Activated CD8-positive, alpha-beta T cell treated with anti-CD3 and anti-CD28 coated beads, Interleukin-2, amount 10 ng/mL, durations not matched to agents 7 days and 5 days (primary cell): ENCODE measurements at regions of chr20 and their contacts with region 1.

Region 1: DNA sequence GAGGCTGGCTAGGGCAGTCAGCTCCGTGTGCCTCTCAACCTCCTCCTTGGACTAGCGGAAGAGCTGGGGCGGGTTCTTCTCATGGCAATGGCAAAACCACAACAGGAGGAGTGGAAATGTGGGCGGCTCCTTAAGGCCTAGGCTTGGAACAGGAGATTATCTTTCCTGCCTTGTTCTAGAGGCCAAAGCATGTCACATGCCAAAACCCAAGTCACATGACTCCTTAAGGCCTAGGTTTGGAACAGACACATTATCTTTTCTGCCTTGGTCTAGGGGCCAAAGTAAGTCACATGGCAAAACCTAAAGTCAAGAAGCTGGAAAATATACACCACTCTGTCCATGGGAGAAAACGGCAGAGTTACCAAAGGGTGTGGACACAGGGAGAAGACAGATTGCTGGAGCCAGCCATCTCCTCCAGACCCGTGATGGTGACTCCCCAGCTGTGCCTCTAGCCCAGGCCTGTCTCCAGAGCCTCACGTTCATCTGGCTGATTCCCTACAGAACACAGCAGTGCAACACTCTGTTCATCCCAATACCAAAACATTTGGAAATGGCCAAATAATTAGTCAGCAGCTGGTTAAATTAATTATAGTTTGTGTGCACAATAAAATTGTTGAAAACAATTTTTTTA is 34.2 kb downstream of the ANKRD60 start:
- DNase-seq: no peak
- ATAC-seq: no peak
- H3K4me3 Mint-ChIP-seq: no peak overlapping the region
- H3K27ac Mint-ChIP-seq: no peak overlapping the region
- H3K4me1 Mint-ChIP-seq: no peaks in the 10 kb centered on the region
- H3K27me3 Mint-ChIP-seq: peaks cover 2% of the 10 kb centered on the region

Region 2: DNA sequence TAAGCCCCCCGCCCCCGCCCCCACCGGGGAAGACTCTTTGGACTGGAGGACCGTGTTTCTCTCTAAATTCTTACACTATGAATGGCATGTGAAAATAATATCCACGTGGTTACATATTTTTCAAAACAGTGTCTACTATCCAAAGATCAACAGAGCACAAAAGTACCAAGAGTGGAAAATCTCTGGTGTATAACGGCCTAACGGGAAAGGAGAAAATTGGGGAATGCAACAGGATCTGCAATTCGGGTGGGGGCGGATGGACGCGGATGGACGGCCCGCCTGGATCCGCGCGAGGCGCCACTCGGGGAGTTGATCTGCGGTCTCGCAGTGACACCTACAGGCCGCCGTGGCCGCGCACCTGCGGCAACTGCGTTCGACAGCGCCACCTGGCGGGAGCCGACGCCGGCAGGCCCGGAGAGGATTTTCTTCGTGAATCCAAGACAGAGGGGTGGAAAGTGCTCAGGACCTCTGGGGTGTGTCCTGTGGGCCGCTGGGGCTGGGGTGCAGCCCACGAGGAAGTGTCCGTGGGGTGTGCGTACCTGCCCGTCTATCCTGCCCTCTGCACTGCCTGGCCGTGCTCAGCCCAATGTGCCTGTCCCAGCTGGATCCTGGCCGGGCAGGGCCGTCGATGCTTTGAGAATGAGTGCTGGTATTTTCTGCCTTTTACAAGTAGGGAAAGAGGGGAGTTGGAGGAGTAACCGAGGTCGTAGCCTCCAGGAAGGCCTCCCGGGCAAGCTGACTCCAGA is 15.5 kb after region 1 on chr20:
- CTCF ChIA-PET with region 1: interaction called, 13 read pairs
- POLR2A ChIA-PET with region 1: no interaction called
- DNase-seq: peak; percentile 87
- ATAC-seq: peak; percentile 98
- H3K4me3 Mint-ChIP-seq: no peak overlapping the region
- H3K27ac Mint-ChIP-seq: no peak overlapping the region
- H3K4me1 Mint-ChIP-seq: no peaks in the 10 kb centered on the region
- H3K27me3 Mint-ChIP-seq: peaks cover 10% of the 10 kb centered on the region